CD4-positive, alpha-beta T cell (primary cell): ENCODE measurements at regions of chr14 and their contacts with region 1.

Region 1: DNA sequence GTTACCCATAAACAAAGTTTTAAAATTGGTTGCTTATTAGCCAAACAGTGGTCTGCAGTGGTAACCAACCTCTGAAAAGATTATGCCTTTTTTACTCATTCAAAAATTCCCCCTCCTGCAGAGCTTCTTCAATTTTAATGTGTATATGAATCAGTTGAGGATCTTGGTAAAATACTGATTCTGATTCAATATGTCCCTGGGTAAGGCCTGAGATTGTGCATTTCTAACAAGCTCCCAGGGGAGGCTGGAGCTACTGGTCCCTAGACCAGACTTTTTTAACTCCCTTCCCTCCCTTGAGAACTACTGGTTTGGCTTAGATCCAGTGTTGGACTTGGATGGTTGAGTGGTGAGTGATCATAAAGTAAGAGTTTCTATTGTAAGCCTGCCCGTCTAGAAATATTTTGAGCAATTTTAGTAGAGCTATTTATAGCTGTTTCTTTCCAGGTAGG is 90.2 kb downstream of the FUT8 start:
- DNase-seq: no peak
- ATAC-seq: no peak
- H3K4me3 ChIP-seq: no peak overlapping the region
- H3K4me3 Mint-ChIP-seq: no peak overlapping the region
- H3K27ac ChIP-seq: no peak overlapping the region
- H3K27ac Mint-ChIP-seq: no peak overlapping the region
- H3K4me1 ChIP-seq: no peaks in the 10 kb centered on the region
- H3K4me1 Mint-ChIP-seq: peaks cover 55% of the 10 kb centered on the region
- H3K27me3 ChIP-seq: no peaks in the 10 kb centered on the region
- H3K27me3 Mint-ChIP-seq: no peaks in the 10 kb centered on the region
- CTCF ChIP-seq: no peak

Region 2: GRCh38 chr14:65528069-65528468 is 25.4 kb after region 1 on chr14:
- CTCF ChIA-PET with region 1: no interaction called
- POLR2A ChIA-PET with region 1: no interaction called
- intact Hi-C with region 1: no loop called
- DNase-seq: no peak
- ATAC-seq: no peak
- H3K4me3 ChIP-seq: no peak overlapping the region
- H3K4me3 Mint-ChIP-seq: no peak overlapping the region
- H3K27ac ChIP-seq: no peak overlapping the region
- H3K27ac Mint-ChIP-seq: no peak overlapping the region
- H3K4me1 ChIP-seq: no peaks in the 10 kb centered on the region
- H3K4me1 Mint-ChIP-seq: peaks cover 10% of the 10 kb centered on the region
- H3K27me3 ChIP-seq: no peaks in the 10 kb centered on the region
- H3K27me3 Mint-ChIP-seq: no peaks in the 10 kb centered on the region
- CTCF ChIP-seq: no peak

Region 3: DNA sequence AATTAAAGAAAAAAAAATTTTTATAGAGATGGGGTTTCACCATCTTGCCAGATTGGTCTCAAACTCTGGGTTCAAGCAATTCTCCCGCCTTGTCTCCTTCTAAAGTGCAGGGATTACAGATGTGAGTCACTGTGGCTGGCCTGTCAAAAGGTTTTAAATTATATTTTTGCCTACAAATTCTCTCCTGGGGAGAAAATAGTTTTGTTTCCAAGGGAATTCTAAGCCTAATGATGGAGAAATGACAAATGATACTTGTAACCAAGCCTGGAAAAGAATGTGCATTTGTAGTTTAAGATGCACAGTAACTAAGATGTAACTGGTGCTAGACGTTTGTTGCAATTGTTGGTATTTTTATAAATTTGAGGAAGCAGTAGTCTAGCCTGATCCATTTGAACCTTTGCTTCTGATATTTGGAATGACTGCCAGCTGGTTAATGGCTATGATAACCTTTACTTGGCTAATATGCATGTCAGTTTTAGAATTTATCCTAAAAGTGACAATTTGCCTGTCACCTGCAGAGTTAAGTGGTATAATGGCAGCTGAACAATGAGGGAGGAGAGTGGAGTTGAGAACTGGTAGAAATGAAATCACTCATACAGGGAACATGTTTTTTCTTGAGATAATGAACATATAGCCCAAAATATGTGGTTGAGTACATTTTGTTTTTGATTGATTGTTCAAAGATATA is 57.8 kb after region 1 on chr14:
- CTCF ChIA-PET with region 1: no interaction called
- POLR2A ChIA-PET with region 1: no interaction called
- intact Hi-C with region 1: loop called in 1 of 2 experiments (anchors 5 kb)
- DNase-seq: no peak
- ATAC-seq: no peak
- H3K4me3 ChIP-seq: no peak overlapping the region
- H3K4me3 Mint-ChIP-seq: no peak overlapping the region
- H3K27ac ChIP-seq: no peak overlapping the region
- H3K27ac Mint-ChIP-seq: no peak overlapping the region
- H3K4me1 ChIP-seq: no peaks in the 10 kb centered on the region
- H3K4me1 Mint-ChIP-seq: peaks cover 38% of the 10 kb centered on the region
- H3K27me3 ChIP-seq: no peaks in the 10 kb centered on the region
- H3K27me3 Mint-ChIP-seq: no peaks in the 10 kb centered on the region
- CTCF ChIP-seq: no peak